ENCODE measurements at regions of chrX and their contacts with region 1.

Region 1: DNA sequence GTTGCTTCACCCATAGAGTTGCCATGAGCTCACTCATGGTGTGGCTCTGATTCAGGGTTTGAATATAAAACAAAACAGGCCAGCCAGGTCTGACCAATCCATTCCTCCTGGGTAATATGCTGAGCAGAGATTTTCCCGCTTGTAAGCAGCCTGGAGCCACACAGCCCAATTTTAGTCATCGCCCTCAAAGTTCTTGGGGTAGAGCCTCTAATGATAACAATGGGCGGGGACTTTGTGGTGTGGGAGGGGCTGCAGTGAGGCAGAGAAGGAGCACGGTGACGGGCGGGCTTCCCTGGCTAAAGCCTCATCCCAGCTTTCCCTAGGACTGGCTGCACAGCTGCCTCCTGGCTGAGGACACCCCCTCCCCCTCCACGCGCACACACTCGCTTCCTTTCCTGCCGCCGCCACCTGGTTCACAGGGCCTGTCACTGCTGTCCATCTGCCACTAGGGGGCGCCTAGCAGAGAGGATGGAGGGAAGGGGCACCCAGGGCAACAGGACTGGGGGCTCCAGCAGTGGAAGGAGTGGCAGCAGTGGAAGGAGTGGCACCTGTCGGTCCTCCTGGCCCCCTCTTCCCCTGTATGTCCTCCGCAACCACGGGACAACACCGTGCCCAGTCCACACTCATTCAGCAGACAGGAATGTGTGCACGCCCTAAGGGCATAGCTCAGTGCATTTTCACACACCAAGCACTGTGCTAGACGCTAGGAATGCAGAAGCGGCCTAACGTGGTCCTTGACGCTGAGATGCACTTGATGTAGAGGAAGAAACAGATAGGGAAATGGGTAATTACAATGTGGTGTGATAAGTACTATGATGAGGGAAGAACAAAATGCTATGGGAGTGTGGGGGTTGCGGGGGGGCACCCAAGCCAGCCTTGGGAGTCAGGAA is 26.8 kb downstream of the PRPS1 start:
- DNase-seq: peak; percentile 77 to 87
- ATAC-seq: peak; percentile 77
- H3K4me3 ChIP-seq: no peak overlapping the region
- H3K27ac ChIP-seq: no peak overlapping the region
- H3K4me1 ChIP-seq: no peaks in the 10 kb centered on the region
- H3K27me3 ChIP-seq: no peaks in the 10 kb centered on the region

Region 2: DNA sequence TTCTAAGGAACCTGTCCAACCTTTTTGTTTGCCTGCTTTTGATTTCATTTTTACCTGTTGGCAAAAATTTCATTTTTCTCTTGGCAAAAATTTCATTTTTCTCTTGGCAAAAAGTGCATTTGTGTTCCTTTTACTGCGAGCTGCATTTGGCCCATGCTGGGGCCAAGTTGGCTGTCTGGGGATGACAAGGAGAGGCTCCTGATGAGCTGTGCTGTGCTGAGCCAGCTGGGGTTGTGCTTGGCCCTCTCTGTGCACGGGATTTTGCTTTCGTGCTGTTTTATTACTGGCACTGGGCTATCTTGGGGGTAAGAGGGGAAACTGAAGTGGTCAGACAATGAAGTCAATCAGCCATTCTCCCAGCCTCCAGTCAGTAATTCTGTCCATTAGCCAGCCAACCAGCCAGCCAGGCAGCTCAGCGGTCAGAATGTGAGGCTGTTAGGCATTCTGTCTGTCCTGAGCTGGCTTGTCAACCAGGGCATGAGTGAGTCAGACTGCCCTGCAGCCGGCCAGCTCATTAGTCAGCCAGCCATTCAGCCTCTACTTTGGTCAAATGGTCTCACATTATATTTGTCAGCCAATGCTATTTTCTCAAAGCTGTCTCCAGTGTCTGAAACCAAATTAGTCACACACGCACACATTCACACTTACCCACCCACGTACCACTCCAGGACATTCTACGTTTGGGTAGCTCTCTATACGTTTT is 83.7 kb before region 1 on chrX:
- intact Hi-C with region 1: no loop called
- DNase-seq: peak in 1 of 2 donors; percentile 67
- ATAC-seq: no peak
- H3K4me3 ChIP-seq: no peak overlapping the region
- H3K27ac ChIP-seq: no peak overlapping the region
- H3K4me1 ChIP-seq: no peaks in the 10 kb centered on the region
- H3K27me3 ChIP-seq: no peaks in the 10 kb centered on the region

Region 3: DNA sequence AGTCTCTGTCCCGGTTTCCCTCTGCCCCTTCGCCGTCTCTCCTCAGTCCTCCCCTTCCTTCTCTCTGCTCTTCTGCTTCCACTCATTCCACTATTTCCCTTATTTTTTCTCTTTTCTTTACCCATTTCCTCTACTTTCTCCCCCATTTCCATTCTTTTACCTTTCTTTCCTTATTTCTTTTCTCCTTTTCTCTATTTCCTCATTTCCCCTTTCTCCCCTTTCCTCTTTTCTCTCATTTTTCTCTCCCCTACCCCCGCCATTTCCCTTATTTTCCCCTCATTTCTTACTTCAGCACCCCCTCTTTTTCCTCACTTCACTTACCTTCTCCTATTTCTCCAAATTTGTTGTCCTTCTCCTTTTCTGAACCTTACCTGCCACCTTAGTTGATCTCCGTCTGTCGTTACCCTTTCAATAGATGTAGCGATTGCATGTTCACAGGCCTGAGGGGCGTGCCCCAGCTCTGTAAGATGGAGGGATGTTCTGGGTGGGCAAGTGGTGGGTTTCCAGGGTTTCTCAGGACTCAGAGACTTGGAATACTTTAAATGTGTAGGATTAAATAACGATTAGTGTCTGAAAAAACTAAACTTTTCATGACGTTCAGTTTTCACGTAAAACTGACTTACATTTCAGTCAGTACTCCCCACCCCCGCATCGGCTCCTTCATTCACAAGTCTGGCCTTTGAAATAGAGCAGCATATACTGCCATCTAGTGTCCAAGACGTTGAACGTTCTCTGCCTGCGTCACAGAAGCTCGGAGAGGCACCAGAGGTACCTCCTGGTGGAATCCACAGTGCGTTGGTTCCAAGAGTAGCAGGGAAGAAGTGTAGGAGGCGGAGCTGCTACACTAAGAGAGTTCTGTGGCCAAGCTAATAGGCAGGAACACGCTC is 121.8 kb after region 1 on chrX:
- intact Hi-C with region 1: loop called (anchors 2 to 5 kb)
- DNase-seq: peak; percentile 83 to 86
- ATAC-seq: peak; percentile 90
- H3K4me3 ChIP-seq: peak overlapping the region; percentile 32 to 59
- H3K27ac ChIP-seq: no peak overlapping the region
- H3K4me1 ChIP-seq: peaks cover 0 to 2% of the 10 kb centered on the region in 2 donors
- H3K27me3 ChIP-seq: no peaks in the 10 kb centered on the region

Region 4: GRCh38 chrX:107894038-107894437 is 238.9 kb after region 1 on chrX:
- intact Hi-C with region 1: loop called (anchors 5 to 10 kb)
- DNase-seq: no peak
- ATAC-seq: peak; percentile 60
- H3K4me3 ChIP-seq: no peak overlapping the region
- H3K27ac ChIP-seq: no peak overlapping the region
- H3K4me1 ChIP-seq: no peaks in the 10 kb centered on the region
- H3K27me3 ChIP-seq: no peaks in the 10 kb centered on the region

Region 5: GRCh38 chrX:108250654-108251579 is 595.8 kb after region 1 on chrX:
- intact Hi-C with region 1: no loop called
- DNase-seq: no peak
- ATAC-seq: no peak
- H3K4me3 ChIP-seq: no peak overlapping the region
- H3K27ac ChIP-seq: no peak overlapping the region
- H3K4me1 ChIP-seq: no peaks in the 10 kb centered on the region
- H3K27me3 ChIP-seq: no peaks in the 10 kb centered on the region

Measured in aorta (tissue), 5 donors.